GM12878 (cell line): ENCODE measurements at regions of chr17 and their contacts with region 1.

Region 1: GRCh38 chr17:59804901-59805465 is 87.8 kb downstream of the TUBD1 start:
- DNase-seq: no peak
- ATAC-seq: peak; percentile 61
- H3K4me3 ChIP-seq: peak overlapping the region; percentile 33
- H3K27ac ChIP-seq: peak overlapping the region; percentile 90
- H3K4me1 ChIP-seq: peaks cover 3% of the 10 kb centered on the region; the same call in 1 of the 2 replicates
- H3K27me3 ChIP-seq: no peaks in the 10 kb centered on the region
- CTCF ChIP-seq: no peak
- EP300 ChIP-seq: no peak
- POLR2A ChIP-seq: no peak
- RAD21 ChIP-seq: no peak

Region 2: DNA sequence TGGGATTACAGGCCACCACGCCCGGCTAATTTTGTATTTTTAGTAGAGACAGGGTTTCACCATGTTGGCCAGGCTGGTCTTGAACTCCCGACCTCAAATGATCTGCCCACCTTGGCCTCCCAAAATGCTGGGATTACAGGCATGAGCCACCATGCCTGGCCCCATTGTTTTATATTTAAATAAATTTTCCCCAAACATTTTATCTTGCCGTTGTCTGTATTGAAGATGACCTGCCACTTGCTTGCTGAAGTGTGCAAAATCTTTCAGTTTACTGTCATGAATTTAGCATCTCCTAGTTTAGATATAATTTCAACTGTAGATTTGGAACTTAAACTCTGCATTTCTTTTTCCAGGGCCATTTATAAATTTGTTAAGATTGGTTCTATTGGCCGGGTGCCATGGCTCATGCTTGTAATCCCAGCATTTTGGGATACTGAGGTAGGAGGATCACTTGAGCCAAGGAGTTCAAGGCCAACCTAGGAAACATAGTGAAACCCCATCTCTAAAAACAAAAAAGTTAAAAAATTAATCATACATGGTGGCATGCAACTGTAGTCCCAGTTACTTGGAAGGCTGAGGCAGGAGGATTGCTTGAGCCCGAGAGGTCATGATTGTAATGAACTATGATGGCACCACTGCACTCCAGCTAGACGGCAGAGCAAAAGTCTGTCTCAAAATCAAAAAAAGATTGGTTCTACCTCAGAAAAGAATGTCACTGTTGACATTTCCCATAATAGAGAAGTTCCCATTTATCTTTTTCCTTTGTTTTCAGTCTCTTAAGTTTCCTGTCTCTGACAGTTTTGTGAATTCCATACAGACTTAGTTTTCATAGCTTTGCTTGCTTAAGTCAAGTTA is 13.2 kb before region 1 on chr17:
- CTCF ChIA-PET with region 1: interaction called, 7 read pairs
- POLR2A ChIA-PET with region 1: interaction called, 13 read pairs
- RAD21 ChIA-PET with region 1: interaction called, 17 read pairs
- SMC1A ChIA-PET with region 1: interaction called, 34 read pairs
- in situ Hi-C with region 1: no loop called
- intact Hi-C with region 1: no loop called
- DNase-seq: no peak
- ATAC-seq: no peak
- H3K4me3 ChIP-seq: no peak overlapping the region
- H3K27ac ChIP-seq: no peak overlapping the region
- H3K4me1 ChIP-seq: peaks cover 17% of the 10 kb centered on the region
- H3K27me3 ChIP-seq: no peaks in the 10 kb centered on the region
- CTCF ChIP-seq: no peak
- EP300 ChIP-seq: no peak
- POLR2A ChIP-seq: no peak
- RAD21 ChIP-seq: no peak

Region 3: GRCh38 chr17:59829217-59830006 is 24.4 kb after region 1 on chr17:
- CTCF ChIA-PET with region 1: interaction called, 11 read pairs
- POLR2A ChIA-PET with region 1: interaction called, 25 read pairs
- RAD21 ChIA-PET with region 1: interaction called, 15 read pairs
- SMC1A ChIA-PET with region 1: interaction called, 36 read pairs
- in situ Hi-C with region 1: no loop called
- intact Hi-C with region 1: no loop called
- DNase-seq: peak; percentile 100
- ATAC-seq: peak; percentile 71
- H3K4me3 ChIP-seq: peak overlapping the region; percentile 65
- H3K27ac ChIP-seq: peak overlapping the region; percentile 98
- H3K4me1 ChIP-seq: peaks cover 88% of the 10 kb centered on the region
- H3K27me3 ChIP-seq: no peaks in the 10 kb centered on the region
- CTCF ChIP-seq: no peak
- EP300 ChIP-seq: peak; percentile 97 to 99
- POLR2A ChIP-seq: peak; percentile 42; the same call in 1 of the 2 replicates
- RAD21 ChIP-seq: peak; percentile 18; the same call in 1 of the 2 replicates

Region 4: DNA sequence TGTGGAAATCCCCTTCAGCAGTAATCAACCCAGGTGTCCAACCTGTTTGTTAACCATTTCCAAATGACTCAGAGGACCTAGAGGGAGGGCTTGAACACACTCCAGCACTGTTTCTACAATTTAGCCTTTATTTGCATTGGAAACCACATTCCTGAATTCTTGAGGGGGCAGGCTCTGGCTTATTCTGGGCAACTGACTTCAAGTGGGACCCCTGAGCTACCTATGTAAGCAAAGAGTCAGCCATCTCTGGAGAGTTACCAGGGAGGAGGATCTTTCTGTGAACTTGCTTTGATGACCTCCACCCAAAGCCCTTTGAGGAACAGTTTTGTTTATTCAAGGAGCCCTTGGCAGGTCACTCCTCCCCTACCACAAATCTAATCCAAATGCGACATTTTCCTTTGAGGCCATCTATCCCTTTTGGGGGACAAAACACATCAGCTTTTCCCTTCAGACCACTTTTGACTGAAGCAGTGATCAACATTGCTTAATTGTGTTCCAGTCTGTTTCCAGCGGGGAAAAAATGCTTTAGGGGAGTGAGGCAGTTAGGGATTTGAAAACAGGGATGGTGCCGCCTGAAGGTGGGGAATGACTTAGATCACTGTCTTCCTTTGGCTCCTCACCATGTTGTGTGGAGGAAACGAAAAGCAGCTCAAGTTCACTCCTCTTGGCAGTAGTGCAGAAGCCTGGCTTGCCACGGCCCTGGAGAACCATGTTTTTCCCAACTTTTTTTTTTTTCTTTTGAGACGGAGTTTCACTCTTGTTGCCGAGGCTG is 41.6 kb after region 1 on chr17:
- CTCF ChIA-PET with region 1: no interaction called
- POLR2A ChIA-PET with region 1: interaction called, 3 read pairs
- RAD21 ChIA-PET with region 1: interaction called, 11 read pairs
- SMC1A ChIA-PET with region 1: interaction called, 4 read pairs
- in situ Hi-C with region 1: no loop called
- intact Hi-C with region 1: no loop called
- DNase-seq: peak; percentile 91
- ATAC-seq: peak; percentile 54
- H3K4me3 ChIP-seq: peak overlapping the region; percentile 28; the same call in 1 of the 2 replicates
- H3K27ac ChIP-seq: peak overlapping the region; percentile 68
- H3K4me1 ChIP-seq: peaks cover 55% of the 10 kb centered on the region
- H3K27me3 ChIP-seq: no peaks in the 10 kb centered on the region
- CTCF ChIP-seq: no peak
- EP300 ChIP-seq: peak; percentile 65 to 76
- POLR2A ChIP-seq: no peak
- RAD21 ChIP-seq: no peak

Region 5: GRCh38 chr17:59876107-59876506 is 71.1 kb after region 1 on chr17:
- CTCF ChIA-PET with region 1: no interaction called
- POLR2A ChIA-PET with region 1: no interaction called
- RAD21 ChIA-PET with region 1: no interaction called
- SMC1A ChIA-PET with region 1: no interaction called
- in situ Hi-C with region 1: no loop called
- intact Hi-C with region 1: no loop called
- DNase-seq: no peak
- ATAC-seq: no peak
- H3K4me3 ChIP-seq: no peak overlapping the region
- H3K27ac ChIP-seq: no peak overlapping the region
- H3K4me1 ChIP-seq: no peaks in the 10 kb centered on the region
- H3K27me3 ChIP-seq: no peaks in the 10 kb centered on the region
- CTCF ChIP-seq: no peak
- EP300 ChIP-seq: no peak
- POLR2A ChIP-seq: no peak
- RAD21 ChIP-seq: no peak

Region 6: GRCh38 chr17:60293580-60294335 is 488.8 kb after region 1 on chr17:
- CTCF ChIA-PET with region 1: no interaction called
- POLR2A ChIA-PET with region 1: no interaction called
- RAD21 ChIA-PET with region 1: no interaction called
- SMC1A ChIA-PET with region 1: no interaction called
- in situ Hi-C with region 1: no loop called
- intact Hi-C with region 1: no loop called
- DNase-seq: no peak
- ATAC-seq: no peak
- H3K4me3 ChIP-seq: no peak overlapping the region
- H3K27ac ChIP-seq: no peak overlapping the region
- H3K4me1 ChIP-seq: no peaks in the 10 kb centered on the region
- H3K27me3 ChIP-seq: no peaks in the 10 kb centered on the region
- CTCF ChIP-seq: no peak
- EP300 ChIP-seq: no peak
- POLR2A ChIP-seq: no peak
- RAD21 ChIP-seq: no peak